CD8-positive, alpha-beta memory T cell (primary cell): ENCODE measurements at regions of chr13 and their contacts with region 1.

Region 1: GRCh38 chr13:99053636-99054233 is 75.9 kb upstream of the DOCK9 start:
- DNase-seq: no peak
- H3K4me3 ChIP-seq: peak overlapping the region; percentile 24
- H3K4me3 Mint-ChIP-seq: peak overlapping the region in 6 of 7 donors; percentile 31 to 69 (median 56)
- H3K27ac ChIP-seq: peak overlapping the region; percentile 7
- H3K27ac Mint-ChIP-seq: peak overlapping the region; percentile 82 to 94 (median 86)
- H3K4me1 ChIP-seq: peaks cover 81% of the 10 kb centered on the region
- H3K4me1 Mint-ChIP-seq: peaks cover 71 to 99% (median 93%) of the 10 kb centered on the region in 3 donors
- H3K27me3 ChIP-seq: no peaks in the 10 kb centered on the region
- H3K27me3 Mint-ChIP-seq: no peaks in the 10 kb centered on the region

Region 2: DNA sequence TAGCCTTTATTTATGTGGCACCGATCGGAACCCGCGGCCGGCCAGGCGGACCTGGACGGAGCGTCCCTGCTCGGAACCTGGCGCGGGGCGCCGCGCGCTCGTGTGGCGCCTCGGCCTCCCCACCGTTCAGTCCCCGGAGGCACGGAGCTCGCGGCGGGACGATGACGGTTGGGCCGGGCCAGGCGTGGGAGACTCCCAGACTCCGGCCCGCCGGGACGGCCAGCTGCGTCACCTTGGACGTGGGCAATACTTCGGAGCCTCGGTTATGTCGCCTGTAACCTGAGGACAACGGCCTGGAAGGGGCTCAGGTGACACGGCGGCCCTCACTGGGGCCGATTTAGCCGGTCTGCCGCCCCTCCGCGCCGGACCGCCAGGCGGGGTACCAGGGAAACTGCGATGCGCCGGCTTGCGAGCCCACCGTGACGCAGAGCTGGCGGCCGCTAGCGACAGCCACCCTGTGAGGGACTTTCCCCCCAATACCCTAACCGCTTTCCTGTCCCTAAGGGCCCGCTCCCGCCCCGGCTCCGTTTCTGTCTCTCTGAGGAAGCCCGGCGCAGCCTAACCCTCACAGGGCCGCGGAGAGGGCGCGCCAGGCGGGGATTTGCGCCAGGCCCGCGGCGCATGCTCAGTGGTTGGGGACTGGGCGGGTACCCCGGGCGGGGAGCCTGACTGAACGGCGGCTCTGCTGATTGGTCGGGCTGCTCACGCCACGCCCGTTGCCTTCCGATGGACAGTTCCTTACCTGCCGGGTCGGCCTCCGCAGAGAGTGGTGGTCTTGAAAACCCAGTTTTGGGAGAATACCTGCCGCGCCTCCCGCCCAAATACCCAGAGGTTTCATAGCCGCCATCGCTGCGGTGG is 33.6 kb after region 1 on chr13:
- CTCF ChIA-PET with region 1: interaction called, 7 read pairs
- POLR2A ChIA-PET with region 1: interaction called, 13 read pairs
- DNase-seq: peak; percentile 87 to 94 (median 91)
- H3K4me3 ChIP-seq: peak overlapping the region; percentile 92
- H3K4me3 Mint-ChIP-seq: peak overlapping the region; percentile 94 to 99 (median 99)
- H3K27ac ChIP-seq: peak overlapping the region; percentile 94
- H3K27ac Mint-ChIP-seq: peak overlapping the region; percentile 97 to 100 (median 99)
- H3K4me1 ChIP-seq: peaks cover 30% of the 10 kb centered on the region
- H3K4me1 Mint-ChIP-seq: peaks cover 32 to 42% (median 41%) of the 10 kb centered on the region in 3 donors
- H3K27me3 ChIP-seq: no peaks in the 10 kb centered on the region
- H3K27me3 Mint-ChIP-seq: peaks cover 0 to 3% of the 10 kb centered on the region in 2 donors

Region 3: DNA sequence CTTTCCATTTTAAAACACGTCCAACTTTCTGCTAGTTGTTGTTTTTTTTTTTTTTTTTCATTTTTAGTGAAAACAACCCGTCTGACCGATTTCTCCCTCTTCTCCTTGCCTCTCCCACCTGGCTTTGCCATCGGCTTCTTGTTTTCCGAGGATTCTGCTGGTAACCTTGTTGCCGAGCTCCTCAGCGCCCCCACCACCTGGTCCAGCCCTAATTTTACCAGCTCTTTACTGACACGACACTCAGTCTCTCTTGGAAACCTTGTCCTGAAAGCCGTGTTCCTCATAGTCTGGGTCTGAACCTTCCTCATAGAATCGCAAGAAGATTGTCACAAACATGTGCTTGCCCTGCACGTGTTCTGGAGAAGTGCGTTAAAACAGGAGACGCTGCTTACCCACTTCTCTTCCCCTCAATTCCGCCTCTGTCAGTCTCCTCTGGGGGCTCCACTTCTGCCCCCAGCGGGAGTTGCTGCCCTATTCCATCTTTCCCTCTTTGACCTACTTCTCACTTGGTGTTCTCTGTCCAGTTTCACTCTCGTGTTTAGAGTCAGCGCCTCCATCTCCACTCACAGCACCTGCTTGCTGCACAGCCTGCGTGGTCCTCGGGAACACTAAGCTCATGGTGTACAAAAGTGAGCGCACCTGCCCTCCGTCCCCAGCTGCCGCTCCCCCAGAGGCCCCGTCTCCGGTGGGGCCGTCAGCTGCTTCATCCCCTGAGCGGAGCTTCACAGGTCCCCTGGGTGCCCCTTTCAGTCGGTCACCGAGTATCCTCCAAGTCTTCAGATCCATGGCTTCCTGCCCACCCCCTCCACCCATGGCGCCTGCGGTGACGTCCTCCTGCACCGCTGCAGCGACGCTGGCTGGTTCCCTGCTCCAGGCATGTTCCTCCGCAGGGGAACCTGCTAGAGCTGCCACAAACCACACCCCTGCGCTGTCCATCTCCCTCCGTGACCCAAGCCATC is 512.7 kb after region 1 on chr13:
- CTCF ChIA-PET with region 1: no interaction called
- POLR2A ChIA-PET with region 1: no interaction called
- DNase-seq: no peak
- H3K4me3 ChIP-seq: no peak overlapping the region
- H3K4me3 Mint-ChIP-seq: peak overlapping the region; percentile 12 to 89 (median 65)
- H3K27ac ChIP-seq: no peak overlapping the region
- H3K27ac Mint-ChIP-seq: peak overlapping the region in 1 of 8 donors; percentile 61
- H3K4me1 ChIP-seq: no peaks in the 10 kb centered on the region
- H3K4me1 Mint-ChIP-seq: peaks cover 8 to 10% (median 9%) of the 10 kb centered on the region in 3 donors
- H3K27me3 ChIP-seq: no peaks in the 10 kb centered on the region
- H3K27me3 Mint-ChIP-seq: no peaks in the 10 kb centered on the region